Mammary epithelial cell (primary cell): ENCODE measurements at regions of chr21 and their contacts with region 1.

Region 1: GRCh38 chr21:40841524-40842202 is 5.3 kb downstream of the DSCAM start:
- DNase-seq: peak; percentile 42
- H3K4me3 ChIP-seq: peak overlapping the region; percentile 44 to 56 (median 55)
- H3K27ac ChIP-seq: peak overlapping the region; percentile 17
- H3K4me1 ChIP-seq: peaks cover 74% of the 10 kb centered on the region
- H3K27me3 ChIP-seq: no peaks in the 10 kb centered on the region
- CTCF ChIP-seq: peak; percentile 59 to 91

Region 2: GRCh38 chr21:40143822-40144525 is 697.7 kb before region 1 on chr21:
- CTCF ChIA-PET with region 1: no interaction called
- dilution Hi-C with region 1: no loop called
- in situ Hi-C with region 1: no loop called
- intact Hi-C with region 1: loop called (anchors 2 kb)
- DNase-seq: peak; percentile 24
- H3K4me3 ChIP-seq: no peak overlapping the region
- H3K27ac ChIP-seq: no peak overlapping the region
- H3K4me1 ChIP-seq: no peaks in the 10 kb centered on the region
- H3K27me3 ChIP-seq: no peaks in the 10 kb centered on the region
- CTCF ChIP-seq: peak; percentile 63

Region 3: GRCh38 chr21:40466893-40467501 is 374.7 kb before region 1 on chr21:
- CTCF ChIA-PET with region 1: no interaction called
- dilution Hi-C with region 1: no loop called
- in situ Hi-C with region 1: loop called (anchors 25 kb)
- intact Hi-C with region 1: loop called (anchors 1 kb)
- DNase-seq: peak; percentile 8
- H3K4me3 ChIP-seq: no peak overlapping the region
- H3K27ac ChIP-seq: no peak overlapping the region
- H3K4me1 ChIP-seq: no peaks in the 10 kb centered on the region
- H3K27me3 ChIP-seq: no peaks in the 10 kb centered on the region
- CTCF ChIP-seq: peak; percentile 52 to 64

Region 4: DNA sequence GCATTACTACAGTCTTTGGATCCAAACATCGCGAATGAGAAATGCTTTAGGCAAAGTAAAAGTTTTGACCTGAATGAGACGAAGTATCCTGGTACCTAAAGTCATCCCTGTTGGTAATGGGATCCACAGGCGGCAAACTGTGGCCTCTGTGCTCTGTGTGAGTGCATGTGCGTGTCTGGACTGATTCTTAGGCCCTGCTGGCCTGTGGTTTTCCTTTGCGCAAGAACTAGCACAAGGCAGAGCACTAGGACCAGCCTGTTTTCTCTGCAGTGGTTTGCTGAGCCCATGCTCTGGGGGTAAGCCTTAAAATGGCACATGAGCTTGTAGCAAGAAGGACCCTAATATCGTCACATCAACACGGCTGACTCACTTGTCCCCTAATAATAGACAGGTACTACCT is 245.9 kb before region 1 on chr21:
- CTCF ChIA-PET with region 1: no interaction called
- dilution Hi-C with region 1: no loop called
- in situ Hi-C with region 1: no loop called
- intact Hi-C with region 1: loop called (anchors 10 kb)
- DNase-seq: peak; percentile 81
- H3K4me3 ChIP-seq: no peak overlapping the region
- H3K27ac ChIP-seq: no peak overlapping the region
- H3K4me1 ChIP-seq: peaks cover 14% of the 10 kb centered on the region
- H3K27me3 ChIP-seq: no peaks in the 10 kb centered on the region
- CTCF ChIP-seq: no peak

Region 5: GRCh38 chr21:40717028-40717427 is 124.6 kb before region 1 on chr21:
- CTCF ChIA-PET with region 1: no interaction called
- dilution Hi-C with region 1: no loop called
- in situ Hi-C with region 1: no loop called
- intact Hi-C with region 1: loop called (anchors 5 kb)
- DNase-seq: peak; percentile 15
- H3K4me3 ChIP-seq: no peak overlapping the region
- H3K27ac ChIP-seq: no peak overlapping the region
- H3K4me1 ChIP-seq: peaks cover 23% of the 10 kb centered on the region
- H3K27me3 ChIP-seq: no peaks in the 10 kb centered on the region
- CTCF ChIP-seq: no peak

Region 6: DNA sequence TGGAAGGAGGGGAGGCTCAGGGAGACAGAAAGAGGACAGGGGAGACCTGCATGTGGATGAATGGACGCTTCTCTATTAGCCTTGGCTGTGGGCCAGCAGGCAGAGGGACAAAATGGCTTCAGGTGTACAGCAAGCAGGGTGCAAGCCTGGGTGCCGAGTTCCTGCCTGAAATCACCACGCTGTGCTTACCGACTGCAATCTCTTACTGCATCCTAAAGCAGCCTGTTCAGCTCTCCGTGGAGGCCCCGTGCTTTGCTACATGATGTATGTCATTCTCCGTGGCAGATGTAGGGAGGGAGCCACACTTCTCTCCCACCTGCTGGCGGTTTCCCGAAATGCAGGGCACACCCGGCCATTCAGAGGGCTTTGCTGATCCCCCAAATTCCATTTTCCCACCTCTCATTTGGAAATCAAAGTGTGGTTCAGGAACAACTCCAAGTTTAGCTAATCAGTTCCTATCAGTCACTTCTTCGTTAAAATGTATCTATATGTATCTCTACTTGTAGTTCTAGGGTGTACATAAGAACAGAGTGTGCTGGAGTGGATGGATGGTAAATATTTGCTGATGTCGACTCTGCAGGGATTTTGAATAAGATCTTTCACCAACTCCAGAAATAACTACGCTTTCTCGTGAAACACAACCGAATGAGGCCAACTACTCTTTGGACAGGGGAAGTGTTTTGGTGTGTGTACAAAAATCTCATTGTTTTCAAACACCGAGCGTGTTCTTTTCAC is 204.0 kb after region 1 on chr21:
- CTCF ChIA-PET with region 1: no interaction called
- dilution Hi-C with region 1: no loop called
- in situ Hi-C with region 1: no loop called
- intact Hi-C with region 1: no loop called
- DNase-seq: no peak
- H3K4me3 ChIP-seq: no peak overlapping the region
- H3K27ac ChIP-seq: no peak overlapping the region
- H3K4me1 ChIP-seq: peaks cover 12% of the 10 kb centered on the region
- H3K27me3 ChIP-seq: no peaks in the 10 kb centered on the region
- CTCF ChIP-seq: peak; percentile 62 to 75